ENCODE measurements at regions of chrX and their contacts with region 1.

Region 1: GRCh38 chrX:3788509-3789233 is 75.2 kb upstream of the PRKX start:
- DNase-seq: no peak
- ATAC-seq: no peak

Region 2: DNA sequence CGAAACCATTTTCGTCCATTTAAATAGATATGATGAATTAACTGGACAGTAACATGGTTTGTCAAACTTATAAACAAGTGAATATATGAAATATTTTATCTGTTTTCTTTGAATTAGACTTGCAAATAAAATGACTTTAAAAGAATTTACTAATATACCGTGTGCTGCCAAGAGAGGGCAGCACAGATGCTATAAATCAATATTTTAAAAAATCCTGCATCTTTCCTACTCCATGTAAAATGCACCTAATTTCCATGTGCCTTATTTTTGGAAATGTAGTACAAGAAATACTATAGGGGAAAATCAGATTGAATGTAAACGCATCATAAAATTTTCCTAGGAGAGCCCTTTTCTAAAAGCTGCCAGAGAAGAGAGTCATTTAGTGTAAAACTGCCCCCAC is 137.4 kb before region 1 on chrX:
- intact Hi-C with region 1: loop called (anchors 10 kb)
- DNase-seq: no peak
- ATAC-seq: no peak

Region 3: GRCh38 chrX:3728454-3728853 is 60.2 kb before region 1 on chrX:
- intact Hi-C with region 1: no loop called
- DNase-seq: no peak
- ATAC-seq: no peak